Activated CD4-positive, alpha-beta T cell treated with anti-CD3 and anti-CD28 coated beads for 36 hours (primary cell): ENCODE measurements at regions of chr7 and their contacts with region 1.

Region 1: GRCh38 chr7:150378853-150379440 is at the start of gene ZNF775:
- DNase-seq: peak; percentile 96
- ATAC-seq: peak; percentile 98
- H3K4me3 Mint-ChIP-seq: peak within 1 kb of the TSS; percentile 81
- H3K27ac Mint-ChIP-seq: peak within 1 kb of the TSS; percentile 63
- H3K4me1 Mint-ChIP-seq: peaks cover 53% of the 10 kb centered on the region
- H3K27me3 Mint-ChIP-seq: no peaks in the 10 kb centered on the region
- total RNA-seq, gene ZNF775: 3.9 to 5.1 TPM

Region 2: DNA sequence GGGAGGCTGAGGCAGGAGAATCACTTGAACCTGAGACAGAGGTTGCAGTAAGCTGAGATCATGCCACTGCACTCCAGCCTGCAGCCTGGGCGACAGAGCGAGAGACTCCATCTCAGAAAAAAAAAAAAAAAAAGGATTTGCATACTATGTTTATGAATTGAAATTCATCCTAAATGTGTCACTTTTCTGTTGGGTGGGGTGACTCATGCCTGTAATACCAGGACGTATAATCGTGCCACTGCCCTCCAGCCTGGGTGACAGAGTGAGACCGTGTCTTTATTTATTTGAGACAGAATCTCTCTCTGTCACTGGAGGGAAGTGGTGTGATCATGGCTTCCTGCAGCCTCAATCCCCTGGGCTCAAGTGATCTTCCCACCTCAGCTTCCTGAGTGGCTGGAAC is 1133.7 kb before region 1 on chr7:
- CTCF ChIA-PET with region 1: no interaction called
- POLR2A ChIA-PET with region 1: no interaction called
- intact Hi-C with region 1: loop called in 1 of 2 experiments (anchors 5 kb)
- DNase-seq: peak; percentile 79
- ATAC-seq: peak; percentile 85
- H3K4me3 Mint-ChIP-seq: peak overlapping the region; percentile 48
- H3K27ac Mint-ChIP-seq: peak overlapping the region; percentile 96
- H3K4me1 Mint-ChIP-seq: peaks cover 72% of the 10 kb centered on the region
- H3K27me3 Mint-ChIP-seq: no peaks in the 10 kb centered on the region

Region 3: DNA sequence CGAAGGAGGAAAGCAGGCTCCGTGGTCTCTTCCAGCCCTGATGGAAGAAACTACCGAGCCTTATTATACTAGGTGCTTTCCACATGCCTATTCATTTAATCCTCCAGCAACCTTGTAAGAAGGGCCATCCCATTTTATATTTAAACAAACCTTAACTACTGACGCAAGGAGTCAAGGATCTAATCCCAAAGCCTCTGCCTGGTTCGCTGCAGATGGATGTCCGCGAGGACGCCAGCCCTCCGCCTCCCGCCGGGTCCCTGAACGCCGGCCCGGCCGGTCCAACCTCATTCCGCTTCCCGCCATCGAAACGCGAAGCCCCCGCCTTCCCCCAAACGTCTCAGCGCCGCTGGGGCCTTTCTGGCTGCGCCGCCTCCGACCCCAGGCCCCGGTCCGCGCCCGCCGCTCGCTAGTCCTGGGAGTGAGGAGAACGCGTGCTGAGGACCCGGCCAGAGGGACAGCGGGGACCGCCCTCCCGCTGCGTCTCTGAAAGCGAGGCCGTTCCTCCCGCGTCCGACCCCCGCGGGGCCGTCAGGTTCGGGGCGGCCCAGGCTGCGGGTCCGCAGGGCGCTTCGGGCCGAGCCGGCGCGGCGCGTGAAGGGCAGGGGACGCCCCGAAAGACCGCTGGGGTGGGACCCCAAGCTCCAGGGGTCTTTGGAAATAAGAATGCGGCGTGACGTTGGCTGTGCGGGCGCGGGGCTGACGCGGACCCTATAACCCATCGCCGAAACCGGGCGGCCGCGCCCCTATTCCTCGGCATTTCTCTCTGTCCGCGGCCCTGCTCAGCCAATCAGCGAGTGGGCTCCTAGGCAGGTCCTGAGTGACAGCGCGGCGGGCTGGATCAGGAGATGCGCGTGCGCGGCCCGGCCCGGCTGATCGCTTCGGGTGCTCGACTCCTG is 505.6 kb before region 1 on chr7 and contains the start of gene ATP6V0E2:
- CTCF ChIA-PET with region 1: no interaction called
- POLR2A ChIA-PET with region 1: no interaction called
- intact Hi-C with region 1: loop called in 1 of 2 experiments (anchors 2 kb)
- DNase-seq: peak; percentile 96
- ATAC-seq: peak; percentile 84
- H3K4me3 Mint-ChIP-seq: peak within 1 kb of the TSS; percentile 82
- H3K27ac Mint-ChIP-seq: peak within 1 kb of the TSS; percentile 91
- H3K4me1 Mint-ChIP-seq: peaks cover 74% of the 10 kb centered on the region
- H3K27me3 Mint-ChIP-seq: no peaks in the 10 kb centered on the region
- total RNA-seq, gene ATP6V0E2: 33.9 to 41.3 TPM

Region 4: GRCh38 chr7:150356265-150356897 is 22.6 kb before region 1 on chr7:
- CTCF ChIA-PET with region 1: interaction called, 4 read pairs
- POLR2A ChIA-PET with region 1: no interaction called
- intact Hi-C with region 1: loop called (anchors 1 kb)
- DNase-seq: peak; percentile 41
- ATAC-seq: no peak
- H3K4me3 Mint-ChIP-seq: no peak overlapping the region
- H3K27ac Mint-ChIP-seq: peak overlapping the region; percentile 2
- H3K4me1 Mint-ChIP-seq: peaks cover 34% of the 10 kb centered on the region
- H3K27me3 Mint-ChIP-seq: no peaks in the 10 kb centered on the region

Region 5: GRCh38 chr7:150404805-150405583 is 26.0 kb after region 1 on chr7:
- CTCF ChIA-PET with region 1: interaction called, 4 read pairs
- POLR2A ChIA-PET with region 1: interaction called, 3 read pairs
- intact Hi-C with region 1: loop called (anchors 1 kb)
- DNase-seq: peak; percentile 85
- ATAC-seq: peak; percentile 74
- H3K4me3 Mint-ChIP-seq: peak overlapping the region; percentile 90
- H3K27ac Mint-ChIP-seq: peak overlapping the region; percentile 91
- H3K4me1 Mint-ChIP-seq: peaks cover 49% of the 10 kb centered on the region
- H3K27me3 Mint-ChIP-seq: no peaks in the 10 kb centered on the region

Region 6: DNA sequence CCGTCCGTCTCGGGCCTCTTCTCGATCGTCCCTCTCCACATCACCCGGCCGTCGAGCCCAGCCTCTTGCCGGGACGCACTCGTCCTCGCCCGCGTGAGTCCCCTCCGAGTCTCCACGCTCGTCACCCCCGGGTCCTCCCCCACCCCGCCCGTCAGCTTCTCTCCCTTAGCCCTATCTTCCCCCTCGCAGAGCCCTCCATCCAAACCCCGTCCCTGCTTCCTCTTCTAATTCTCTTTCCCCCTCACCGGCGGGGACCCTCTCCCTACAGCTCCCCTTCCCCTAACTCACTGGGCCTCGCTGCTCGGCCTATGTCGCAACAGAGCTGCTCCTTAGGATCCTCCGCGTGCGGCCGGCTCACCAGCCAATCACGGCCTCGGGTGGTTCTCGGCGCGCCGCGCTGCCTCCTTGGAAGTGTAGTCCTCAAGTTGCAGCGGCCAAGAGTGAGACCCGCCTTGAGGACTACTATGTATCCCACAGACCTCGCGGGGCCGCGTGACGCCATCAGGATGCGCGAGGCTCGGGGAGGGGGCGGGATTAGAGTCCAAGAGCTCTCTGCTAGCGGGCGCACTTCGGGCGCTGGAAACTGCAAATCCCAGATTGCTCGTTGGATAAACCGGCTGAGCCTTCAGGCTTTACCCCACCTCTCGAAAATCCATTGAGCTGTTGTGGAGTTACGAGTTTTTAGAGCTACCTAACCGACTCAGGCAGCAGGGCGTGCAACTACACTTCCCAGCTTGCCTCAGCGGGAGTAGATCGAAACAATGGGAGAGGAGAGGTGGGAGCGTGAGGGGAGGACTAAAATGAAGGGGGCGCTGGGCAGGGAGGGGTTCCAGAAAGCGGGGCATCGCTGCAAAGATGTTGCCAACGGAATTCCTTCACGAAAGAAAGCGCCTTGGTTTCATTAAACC is 848.2 kb after region 1 on chr7 and contains the start of gene ABCF2:
- CTCF ChIA-PET with region 1: no interaction called
- POLR2A ChIA-PET with region 1: no interaction called
- intact Hi-C with region 1: loop called in 1 of 2 experiments (anchors 1 kb)
- DNase-seq: peak; percentile 99
- ATAC-seq: peak; percentile 100
- H3K4me3 Mint-ChIP-seq: peak within 1 kb of the TSS; percentile 92
- H3K27ac Mint-ChIP-seq: peak within 1 kb of the TSS; percentile 92
- H3K4me1 Mint-ChIP-seq: peaks cover 40% of the 10 kb centered on the region
- H3K27me3 Mint-ChIP-seq: no peaks in the 10 kb centered on the region
- total RNA-seq, gene ABCF2: 48.4 to 49.0 TPM